ENCODE measurements at regions of chr1 and their contacts with region 1.

Region 1: GRCh38 chr1:154558575-154559465 is at the start of gene UBE2Q1:
- DNase-seq: peak; percentile 99
- H3K4me3 ChIP-seq: peak within 1 kb of the TSS; percentile 92
- H3K27ac ChIP-seq: peak within 1 kb of the TSS; percentile 67
- H3K4me1 ChIP-seq: peaks cover 26% of the 10 kb centered on the region
- H3K27me3 ChIP-seq: no peaks in the 10 kb centered on the region
- CTCF ChIP-seq: no peak
- POLR2A ChIP-seq: peak; percentile 57
- total RNA-seq, gene UBE2Q1: 85.4 and 97.2 TPM in 2 replicates

Region 2: GRCh38 chr1:154479764-154480421 is 78.9 kb before region 1 on chr1:
- CTCF ChIA-PET with region 1: interaction called, 49 read pairs
- POLR2A ChIA-PET with region 1: no interaction called
- dilution Hi-C with region 1: no loop called
- intact Hi-C with region 1: no loop called
- DNase-seq: peak; percentile 92
- H3K4me3 ChIP-seq: no peak overlapping the region
- H3K27ac ChIP-seq: no peak overlapping the region
- H3K4me1 ChIP-seq: peaks cover 35% of the 10 kb centered on the region
- H3K27me3 ChIP-seq: no peaks in the 10 kb centered on the region
- CTCF ChIP-seq: peak; percentile 77 to 93
- POLR2A ChIP-seq: no peak

Region 3: DNA sequence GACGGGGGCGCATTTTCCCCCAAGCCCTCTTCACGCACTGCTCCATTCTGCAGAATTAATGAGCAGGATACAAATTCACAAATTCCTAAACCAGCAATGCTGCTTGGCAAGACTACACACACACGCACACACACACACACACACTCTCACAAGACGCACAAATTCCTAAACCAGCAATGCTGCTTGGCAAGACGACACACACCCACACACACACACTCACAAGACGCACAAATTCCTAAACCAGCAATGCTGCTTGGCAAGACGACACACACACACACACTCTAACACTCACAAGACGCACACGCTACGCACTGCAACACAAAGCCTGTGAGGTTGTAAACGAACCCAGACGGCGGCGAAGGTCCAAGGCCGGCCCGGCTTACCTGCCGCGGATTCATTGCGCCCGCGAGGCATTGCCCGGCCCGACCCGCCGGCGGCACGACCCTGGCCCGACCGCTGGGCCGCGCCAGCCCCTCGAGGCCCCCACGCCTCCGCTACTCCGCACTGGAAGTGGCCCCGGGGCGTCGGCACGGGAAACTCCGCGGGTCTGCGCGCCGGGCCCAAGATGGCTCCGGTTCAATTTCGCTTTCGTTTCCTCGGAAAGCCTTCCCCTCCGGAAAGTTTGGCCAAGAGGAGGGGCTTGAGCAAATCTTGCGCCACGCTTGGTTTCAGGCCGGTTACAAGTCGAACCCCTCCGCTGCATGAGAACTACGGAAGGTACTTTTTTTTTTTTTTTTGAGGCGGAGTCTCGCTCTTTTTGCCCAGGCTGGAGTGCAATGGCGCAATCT is 49.0 kb after region 1 on chr1 and contains the start of gene ADAR:
- CTCF ChIA-PET with region 1: interaction called, 8 read pairs
- POLR2A ChIA-PET with region 1: interaction called, 4 read pairs
- dilution Hi-C with region 1: no loop called
- intact Hi-C with region 1: loop called (anchors 1 kb)
- DNase-seq: peak; percentile 94
- H3K4me3 ChIP-seq: peak within 1 kb of the TSS; percentile 15 to 68 (median 47)
- H3K27ac ChIP-seq: peak within 1 kb of the TSS; percentile 56
- H3K4me1 ChIP-seq: peaks cover 6% of the 10 kb centered on the region
- H3K27me3 ChIP-seq: no peaks in the 10 kb centered on the region
- CTCF ChIP-seq: no peak
- POLR2A ChIP-seq: no peak
- total RNA-seq, gene ADAR: 128 and 141 TPM in 2 replicates

Region 4: GRCh38 chr1:154870115-154870571 is 311.3 kb after region 1 on chr1 and contains the start of gene KCNN3:
- CTCF ChIA-PET with region 1: interaction called, 5 read pairs
- POLR2A ChIA-PET with region 1: no interaction called
- dilution Hi-C with region 1: no loop called
- intact Hi-C with region 1: loop called (anchors 2 kb)
- DNase-seq: peak; percentile 93
- H3K4me3 ChIP-seq: peak within 1 kb of the TSS; percentile 13 to 44 (median 41)
- H3K27ac ChIP-seq: no peak within 1 kb of the TSS
- H3K4me1 ChIP-seq: peaks cover 26% of the 10 kb centered on the region
- H3K27me3 ChIP-seq: peaks cover 20 to 24% of the 10 kb centered on the region in 2 experiments
- CTCF ChIP-seq: no peak
- POLR2A ChIP-seq: no peak
- total RNA-seq, gene KCNN3: 0.85 and 1.1 TPM in 2 replicates

Region 5: GRCh38 chr1:154955718-154956543 is 397.1 kb after region 1 on chr1 and contains the start of gene PBXIP1:
- CTCF ChIA-PET with region 1: interaction called, 6 read pairs
- POLR2A ChIA-PET with region 1: no interaction called
- dilution Hi-C with region 1: no loop called
- intact Hi-C with region 1: loop called (anchors 1 kb)
- DNase-seq: peak; percentile 98
- H3K4me3 ChIP-seq: peak within 1 kb of the TSS; percentile 19 to 76 (median 57)
- H3K27ac ChIP-seq: peak within 1 kb of the TSS; percentile 69
- H3K4me1 ChIP-seq: peaks cover 26% of the 10 kb centered on the region
- H3K27me3 ChIP-seq: no peaks in the 10 kb centered on the region
- CTCF ChIP-seq: peak; percentile 12 to 33
- POLR2A ChIP-seq: no peak
- total RNA-seq, gene PBXIP1: 49.0 and 49.4 TPM in 2 replicates

Measured in endothelial cell of umbilical vein (primary cell).